T-cell (primary cell): ENCODE measurements at regions of chr7 and their contacts with region 1.

Region 1: DNA sequence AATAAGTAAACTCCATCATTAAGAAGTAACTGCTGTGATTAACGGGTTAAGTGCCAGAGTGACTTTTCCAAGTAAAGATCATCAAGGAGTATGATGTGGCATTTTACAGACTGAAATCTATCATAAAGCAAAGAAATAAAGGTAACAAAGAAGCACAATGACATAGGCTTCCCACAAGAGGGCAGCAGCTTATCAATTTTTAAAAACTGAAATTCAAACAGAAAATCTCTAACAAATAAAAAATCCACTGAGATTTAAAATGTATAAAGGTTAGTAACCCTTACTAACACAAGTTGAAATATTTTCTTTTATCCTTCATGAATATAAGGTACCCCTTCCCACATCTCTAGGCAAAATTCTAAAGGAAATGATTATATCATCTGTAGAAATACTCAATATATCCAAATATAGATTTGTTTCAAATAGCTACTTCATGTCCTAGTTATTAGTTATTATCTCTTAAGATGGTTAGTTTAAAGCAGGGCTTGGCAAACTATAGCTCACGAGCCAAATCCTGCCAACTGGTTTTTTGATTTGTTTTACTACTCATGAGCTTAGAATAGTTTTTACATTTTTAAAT is 29.2 kb downstream of the FAM3C start:
- DNase-seq: peak in 14 of 35 experiments; percentile 2 to 70 (median 16)
- ATAC-seq: no peak
- H3K4me3 ChIP-seq: no peak overlapping the region
- H3K4me3 Mint-ChIP-seq: no peak overlapping the region
- H3K27ac ChIP-seq: no peak overlapping the region
- H3K27ac Mint-ChIP-seq: no peak overlapping the region
- H3K4me1 ChIP-seq: no peaks in the 10 kb centered on the region
- H3K4me1 Mint-ChIP-seq: peaks cover 6 to 29% (median 22%) of the 10 kb centered on the region in 3 donors
- H3K27me3 ChIP-seq: no peaks in the 10 kb centered on the region
- H3K27me3 Mint-ChIP-seq: no peaks in the 10 kb centered on the region

Region 2: DNA sequence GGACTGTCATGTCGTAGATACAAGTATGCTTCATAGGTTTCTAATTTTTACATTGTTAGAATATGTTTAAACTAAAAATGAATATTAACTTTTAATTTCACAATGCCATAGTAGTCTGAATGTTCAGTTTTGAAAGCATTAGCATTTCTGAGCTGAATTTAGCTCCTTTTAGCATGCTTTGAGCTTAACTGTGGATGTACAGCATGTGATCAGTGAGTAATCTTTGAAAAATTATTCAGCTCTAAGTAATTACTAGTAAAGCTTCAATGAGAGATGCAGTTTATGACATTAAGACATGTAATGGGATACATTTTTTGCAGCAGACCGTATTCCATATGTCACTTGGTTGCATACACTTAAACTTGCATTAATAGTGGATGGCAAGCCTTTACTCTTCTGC is 152.3 kb before region 1 on chr7:
- CTCF ChIA-PET with region 1: no interaction called
- POLR2A ChIA-PET with region 1: no interaction called
- DNase-seq: no peak
- ATAC-seq: no peak
- H3K4me3 ChIP-seq: no peak overlapping the region
- H3K4me3 Mint-ChIP-seq: no peak overlapping the region
- H3K27ac ChIP-seq: no peak overlapping the region
- H3K27ac Mint-ChIP-seq: no peak overlapping the region
- H3K4me1 ChIP-seq: no peaks in the 10 kb centered on the region
- H3K4me1 Mint-ChIP-seq: no peaks in the 10 kb centered on the region
- H3K27me3 ChIP-seq: no peaks in the 10 kb centered on the region
- H3K27me3 Mint-ChIP-seq: peaks cover 0 to 2% of the 10 kb centered on the region in 2 donors

Region 3: DNA sequence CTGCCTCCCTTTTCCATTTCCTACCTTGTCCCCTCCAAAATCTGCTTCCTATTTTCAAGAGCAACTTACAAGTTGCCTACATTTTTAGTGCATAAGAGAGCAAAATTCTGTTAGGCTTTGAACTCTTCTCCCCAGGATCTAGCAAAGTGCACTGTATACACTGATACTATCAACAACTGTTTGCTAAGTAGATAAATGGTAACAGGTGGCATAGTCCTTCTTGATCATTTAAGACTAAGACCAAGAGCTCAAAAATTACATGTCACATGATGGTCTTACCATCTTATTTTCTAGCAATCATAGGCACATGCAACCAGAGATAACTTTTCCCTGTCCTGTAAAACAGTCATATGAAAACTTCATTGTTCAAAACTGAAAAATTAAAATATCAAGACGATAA is 13.0 kb after region 1 on chr7:
- CTCF ChIA-PET with region 1: interaction called, 4 to 15 read pairs
- POLR2A ChIA-PET with region 1: no interaction called
- DNase-seq: no peak
- ATAC-seq: no peak
- H3K4me3 ChIP-seq: no peak overlapping the region
- H3K4me3 Mint-ChIP-seq: no peak overlapping the region
- H3K27ac ChIP-seq: no peak overlapping the region
- H3K27ac Mint-ChIP-seq: peak overlapping the region in 1 of 2 donors; percentile 37
- H3K4me1 ChIP-seq: peaks cover 2 to 3% of the 10 kb centered on the region in 2 experiments
- H3K4me1 Mint-ChIP-seq: peaks cover 27 to 40% (median 27%) of the 10 kb centered on the region in 3 donors
- H3K27me3 ChIP-seq: no peaks in the 10 kb centered on the region
- H3K27me3 Mint-ChIP-seq: no peaks in the 10 kb centered on the region

Region 4: GRCh38 chr7:121395961-121396757 is 29.2 kb after region 1 on chr7 and contains the start of gene FAM3C:
- CTCF ChIA-PET with region 1: interaction called, 27 to 37 read pairs
- POLR2A ChIA-PET with region 1: no interaction called
- DNase-seq: peak; percentile 24 to 84 (median 50)
- ATAC-seq: peak; percentile 82 to 87 (median 82)
- H3K4me3 ChIP-seq: peak within 1 kb of the TSS; percentile 56 to 82
- H3K4me3 Mint-ChIP-seq: peak within 1 kb of the TSS; percentile 80 to 89 (median 83)
- H3K27ac ChIP-seq: peak within 1 kb of the TSS; percentile 70
- H3K27ac Mint-ChIP-seq: peak within 1 kb of the TSS; percentile 79 to 80
- H3K4me1 ChIP-seq: peaks cover 5 to 7% of the 10 kb centered on the region in 2 experiments
- H3K4me1 Mint-ChIP-seq: peaks cover 33 to 39% (median 37%) of the 10 kb centered on the region in 3 donors
- H3K27me3 ChIP-seq: no peaks in the 10 kb centered on the region
- H3K27me3 Mint-ChIP-seq: no peaks in the 10 kb centered on the region
- total RNA-seq, gene FAM3C: 8.8 to 21.8 (median 14.9) TPM

Region 5: DNA sequence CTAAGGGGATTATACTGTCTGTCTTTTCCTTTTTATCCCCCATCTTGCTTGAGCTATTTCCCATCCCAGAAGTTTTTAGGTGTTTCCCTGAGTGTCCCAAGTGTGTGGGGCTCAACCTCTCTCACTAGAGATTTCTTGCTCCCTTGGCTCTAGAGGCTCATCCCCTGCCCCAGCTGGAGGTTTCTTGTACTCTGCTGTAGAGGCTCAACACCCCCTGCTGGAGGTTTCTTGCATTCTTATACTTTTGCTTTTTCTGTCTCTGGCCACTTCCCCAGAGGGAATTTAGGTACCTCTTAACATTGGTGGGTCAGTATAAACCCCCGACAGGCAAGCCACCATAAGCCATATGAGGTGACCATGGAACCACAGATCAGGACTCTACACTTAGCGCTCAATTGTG is 143.4 kb after region 1 on chr7:
- CTCF ChIA-PET with region 1: interaction called, 4 to 10 read pairs
- POLR2A ChIA-PET with region 1: interaction called, 3 to 4 read pairs
- DNase-seq: peak in 15 of 35 experiments; percentile 1 to 58 (median 4)
- ATAC-seq: no peak
- H3K4me3 ChIP-seq: no peak overlapping the region
- H3K4me3 Mint-ChIP-seq: no peak overlapping the region
- H3K27ac ChIP-seq: no peak overlapping the region
- H3K27ac Mint-ChIP-seq: no peak overlapping the region
- H3K4me1 ChIP-seq: no peaks in the 10 kb centered on the region
- H3K4me1 Mint-ChIP-seq: no peaks in the 10 kb centered on the region
- H3K27me3 ChIP-seq: no peaks in the 10 kb centered on the region
- H3K27me3 Mint-ChIP-seq: peaks cover 3 to 9% of the 10 kb centered on the region in 2 donors

Region 6: GRCh38 chr7:121547544-121548092 is 180.7 kb after region 1 on chr7:
- CTCF ChIA-PET with region 1: interaction called, 31 to 78 read pairs
- POLR2A ChIA-PET with region 1: interaction called in 1 of 2 experiments, 4 read pairs
- DNase-seq: peak in 2 of 35 experiments; percentile 19 to 74
- ATAC-seq: peak; percentile 64 to 75 (median 70)
- H3K4me3 ChIP-seq: no peak overlapping the region
- H3K4me3 Mint-ChIP-seq: no peak overlapping the region
- H3K27ac ChIP-seq: no peak overlapping the region
- H3K27ac Mint-ChIP-seq: no peak overlapping the region
- H3K4me1 ChIP-seq: no peaks in the 10 kb centered on the region
- H3K4me1 Mint-ChIP-seq: peaks cover 0 to 19% (median 16%) of the 10 kb centered on the region in 3 donors
- H3K27me3 ChIP-seq: no peaks in the 10 kb centered on the region
- H3K27me3 Mint-ChIP-seq: peaks cover 0 to 3% of the 10 kb centered on the region in 2 donors